Activated CD8-positive, alpha-beta T cell treated with anti-CD3 and anti-CD28 coated beads for 36 hours (primary cell): ENCODE measurements at regions of chr3 and their contacts with region 1.

Region 1: DNA sequence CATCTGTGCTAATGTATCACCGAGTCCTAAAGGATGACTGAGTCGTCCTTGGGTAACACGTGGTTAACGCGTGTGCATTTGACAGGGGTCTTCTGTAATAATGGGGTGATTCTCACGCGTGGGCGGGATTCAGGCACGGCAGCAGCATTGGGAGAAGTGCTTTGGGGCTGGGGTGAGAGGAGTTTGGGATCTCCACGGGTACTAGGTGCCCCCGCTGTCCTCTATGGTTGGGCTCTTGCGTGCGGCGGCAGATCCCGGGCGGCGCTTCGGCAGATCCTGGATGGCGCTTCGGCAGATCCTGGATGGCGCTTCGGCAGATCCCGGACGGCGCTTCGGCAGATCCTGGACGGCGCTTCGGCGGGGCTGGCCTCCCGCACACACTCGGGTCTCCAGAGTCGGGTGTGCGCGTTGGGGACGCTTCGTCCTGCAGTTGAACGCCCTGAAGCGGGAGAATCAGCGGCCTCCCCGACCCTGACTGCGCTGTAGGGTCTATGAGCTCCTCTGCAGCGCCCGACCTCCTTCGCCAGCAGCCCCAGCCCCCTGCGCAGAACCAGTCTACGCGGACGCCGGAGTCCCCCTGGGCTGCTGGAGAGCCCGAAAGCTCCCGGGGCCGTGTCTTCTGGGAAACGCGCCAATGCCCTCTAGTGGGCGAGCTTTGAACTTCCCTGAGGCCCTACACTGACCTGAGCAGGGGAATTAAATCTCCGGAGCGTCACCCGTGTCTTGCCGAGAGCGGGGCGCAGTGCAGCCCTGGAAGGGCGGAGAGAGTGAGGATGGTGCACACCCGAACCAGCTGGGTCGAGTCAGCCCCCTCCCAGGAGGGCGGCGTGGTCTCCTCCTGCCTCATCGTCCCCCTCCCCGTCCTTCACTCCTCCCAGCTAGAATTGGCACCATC is 48.1 kb upstream of the EPHB3 start:
- DNase-seq: peak; percentile 91
- ATAC-seq: peak; percentile 100
- H3K4me3 Mint-ChIP-seq: peak overlapping the region; percentile 51
- H3K27ac Mint-ChIP-seq: no peak overlapping the region
- H3K4me1 Mint-ChIP-seq: peaks cover 3% of the 10 kb centered on the region
- H3K27me3 Mint-ChIP-seq: peaks cover 48% of the 10 kb centered on the region
- CTCF ChIP-seq: peak; percentile 90

Region 2: DNA sequence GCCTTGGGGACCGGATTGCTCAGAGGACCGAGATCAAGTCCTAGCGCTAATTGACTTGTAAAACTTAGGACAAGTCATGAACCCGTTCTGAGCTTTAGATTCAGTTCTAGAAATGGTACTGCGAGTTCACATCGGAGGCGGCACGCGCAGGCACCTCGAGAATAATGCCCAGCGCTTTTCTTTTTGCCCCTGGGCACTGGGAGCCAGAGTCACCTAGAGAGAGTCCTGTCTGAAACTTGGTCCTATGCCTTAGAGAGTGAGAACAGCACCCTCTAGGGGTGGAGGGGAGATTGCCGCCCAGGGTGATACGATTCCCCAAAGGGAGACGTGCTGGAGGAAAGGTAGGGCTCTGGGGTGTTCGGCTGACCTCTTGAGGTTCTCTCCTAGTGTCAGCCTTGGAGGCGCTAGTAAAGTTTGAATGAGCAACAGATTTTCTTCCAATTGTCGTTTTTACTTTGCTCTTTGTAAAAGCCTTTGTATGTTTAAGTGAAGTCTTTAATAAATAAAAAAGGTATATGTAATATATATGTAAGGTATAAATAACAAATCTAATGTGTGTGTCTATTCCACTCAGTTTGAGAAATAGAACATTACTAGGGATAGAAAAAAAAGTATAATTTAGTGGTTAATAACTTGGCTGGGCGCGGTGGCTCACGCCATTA is 263.2 kb before region 1 on chr3:
- CTCF ChIA-PET with region 1: no interaction called
- POLR2A ChIA-PET with region 1: no interaction called
- intact Hi-C with region 1: no loop called
- DNase-seq: peak; percentile 98
- ATAC-seq: peak; percentile 67
- H3K4me3 Mint-ChIP-seq: peak overlapping the region; percentile 91
- H3K27ac Mint-ChIP-seq: peak overlapping the region; percentile 97
- H3K4me1 Mint-ChIP-seq: peaks cover 16% of the 10 kb centered on the region
- H3K27me3 Mint-ChIP-seq: no peaks in the 10 kb centered on the region
- CTCF ChIP-seq: peak; percentile 85

Region 3: DNA sequence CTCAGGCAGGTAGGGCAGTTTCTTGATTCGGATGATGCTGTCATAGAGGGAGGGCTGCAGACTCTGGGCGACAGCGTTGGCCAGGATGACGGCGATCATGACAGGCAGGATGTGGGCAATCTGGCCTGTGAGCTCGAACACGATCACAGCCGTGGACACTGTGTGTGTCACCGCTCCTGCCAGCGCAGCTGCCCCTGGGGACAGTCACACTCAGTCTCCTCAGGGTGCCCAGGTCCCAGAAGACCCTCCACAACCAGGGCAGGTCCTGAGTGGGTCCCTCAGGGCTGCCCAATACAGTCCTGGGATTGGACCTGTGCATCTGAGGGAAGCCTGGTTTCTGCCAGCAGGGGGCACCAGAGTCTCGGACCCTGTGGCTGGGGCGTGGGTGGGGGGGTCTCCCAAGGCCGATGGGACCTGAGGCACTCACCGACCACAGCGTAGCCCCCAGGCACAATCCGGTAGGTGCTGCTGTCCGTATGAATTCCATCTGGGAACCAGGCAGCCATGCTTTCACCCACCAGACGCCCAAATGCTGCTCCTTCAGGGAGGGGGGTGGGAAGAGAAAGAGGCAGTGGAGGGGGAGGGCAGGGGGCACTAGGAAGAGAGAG is 159.3 kb before region 1 on chr3:
- CTCF ChIA-PET with region 1: interaction called, 11 read pairs
- POLR2A ChIA-PET with region 1: interaction called, 3 read pairs
- intact Hi-C with region 1: no loop called
- DNase-seq: peak; percentile 82
- ATAC-seq: peak; percentile 89
- H3K4me3 Mint-ChIP-seq: no peak overlapping the region
- H3K27ac Mint-ChIP-seq: peak overlapping the region; percentile 11
- H3K4me1 Mint-ChIP-seq: peaks cover 4% of the 10 kb centered on the region
- H3K27me3 Mint-ChIP-seq: no peaks in the 10 kb centered on the region
- CTCF ChIP-seq: peak; percentile 76

Region 4: GRCh38 chr3:184371570-184372018 is 141.9 kb before region 1 on chr3:
- CTCF ChIA-PET with region 1: interaction called, 103 read pairs
- POLR2A ChIA-PET with region 1: no interaction called
- intact Hi-C with region 1: no loop called
- DNase-seq: peak; percentile 77
- ATAC-seq: peak; percentile 99
- H3K4me3 Mint-ChIP-seq: no peak overlapping the region
- H3K27ac Mint-ChIP-seq: no peak overlapping the region
- H3K4me1 Mint-ChIP-seq: peaks cover 10% of the 10 kb centered on the region
- H3K27me3 Mint-ChIP-seq: no peaks in the 10 kb centered on the region
- CTCF ChIP-seq: peak; percentile 81

Region 5: DNA sequence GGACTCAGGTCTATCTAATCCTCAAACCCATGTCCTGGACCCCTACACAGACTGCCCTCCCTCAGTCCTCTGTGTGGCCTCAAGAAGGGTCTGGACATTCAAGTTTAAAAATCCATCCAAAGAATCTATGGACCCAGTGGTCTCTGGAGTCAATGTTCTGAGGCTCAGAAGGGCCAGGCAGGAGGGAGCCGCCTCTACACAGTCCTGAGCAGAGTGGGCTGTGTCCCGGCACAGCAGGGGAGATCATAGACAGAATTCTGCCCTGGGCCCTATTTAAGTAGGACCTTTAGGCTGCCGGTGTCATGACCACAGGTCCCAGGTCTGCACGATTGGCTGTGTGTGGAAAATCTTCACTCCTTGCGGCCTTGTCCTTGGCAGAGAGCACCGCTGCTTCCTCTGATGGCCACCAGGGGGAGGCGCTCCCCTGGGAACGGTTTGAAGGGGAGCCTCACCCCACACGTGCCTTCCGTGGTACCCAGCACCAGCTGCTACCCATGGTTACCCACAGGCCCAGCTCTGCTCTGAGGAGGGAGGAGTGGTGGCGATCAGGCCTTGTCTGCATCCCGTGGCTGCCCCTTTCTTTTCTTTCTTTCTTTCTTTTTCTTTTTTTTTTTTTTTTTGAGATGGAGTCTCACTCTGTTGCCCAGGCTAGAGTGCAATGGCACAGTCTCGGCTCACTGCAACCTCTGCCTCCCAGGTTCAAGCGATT is 95.8 kb before region 1 on chr3:
- CTCF ChIA-PET with region 1: interaction called, 69 read pairs
- POLR2A ChIA-PET with region 1: no interaction called
- intact Hi-C with region 1: loop called (anchors 10 kb)
- DNase-seq: peak; percentile 78
- ATAC-seq: peak; percentile 98
- H3K4me3 Mint-ChIP-seq: no peak overlapping the region
- H3K27ac Mint-ChIP-seq: no peak overlapping the region
- H3K4me1 Mint-ChIP-seq: no peaks in the 10 kb centered on the region
- H3K27me3 Mint-ChIP-seq: peaks cover under 1% of the 10 kb centered on the region
- CTCF ChIP-seq: peak; percentile 87

Region 6: DNA sequence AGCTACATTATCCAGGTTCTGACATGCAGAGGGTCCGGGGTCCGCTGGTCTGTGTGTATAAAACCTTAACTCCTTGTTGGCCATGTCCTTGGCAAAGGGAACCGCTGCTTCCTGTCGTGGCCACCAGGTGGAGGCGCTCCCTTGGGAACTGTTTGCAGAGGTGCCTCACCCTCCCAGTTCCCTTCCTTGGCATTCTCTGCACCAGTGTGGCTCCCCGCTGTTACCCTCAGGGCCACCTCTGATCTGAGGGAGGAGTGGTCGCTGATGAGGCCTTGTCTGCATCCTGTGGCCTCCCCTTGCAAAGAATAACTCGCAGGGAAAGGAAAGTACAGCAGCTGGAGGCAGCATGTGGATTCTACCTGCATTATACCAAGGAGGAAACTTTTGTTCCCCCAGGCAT is 44.1 kb before region 1 on chr3:
- CTCF ChIA-PET with region 1: interaction called, 40 read pairs
- POLR2A ChIA-PET with region 1: interaction called, 3 read pairs
- intact Hi-C with region 1: loop called (anchors 5 kb)
- DNase-seq: peak; percentile 56
- ATAC-seq: peak; percentile 55
- H3K4me3 Mint-ChIP-seq: no peak overlapping the region
- H3K27ac Mint-ChIP-seq: no peak overlapping the region
- H3K4me1 Mint-ChIP-seq: peaks cover 20% of the 10 kb centered on the region
- H3K27me3 Mint-ChIP-seq: peaks cover 26% of the 10 kb centered on the region
- CTCF ChIP-seq: peak; percentile 63

Region 7: DNA sequence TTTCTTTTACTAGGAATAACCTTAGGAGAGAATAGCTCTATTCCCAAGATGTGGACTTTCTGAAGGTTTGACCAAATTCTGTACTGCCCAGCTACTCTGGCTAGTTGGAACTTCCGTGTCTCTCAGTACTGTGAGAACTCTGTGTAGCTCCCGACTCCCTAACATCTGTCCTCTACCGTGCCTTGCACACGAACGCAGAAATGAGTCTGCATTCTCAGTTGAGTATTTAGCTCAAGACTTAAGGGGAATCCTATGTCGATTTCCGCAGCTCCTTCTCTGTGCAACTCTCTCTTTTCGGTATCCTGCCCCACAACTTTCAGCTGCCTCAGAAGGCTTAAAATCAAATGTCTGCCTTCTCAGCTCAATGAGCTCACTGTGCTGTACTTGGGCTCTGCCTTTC is 38.6 kb before region 1 on chr3:
- CTCF ChIA-PET with region 1: interaction called, 40 read pairs
- POLR2A ChIA-PET with region 1: no interaction called
- intact Hi-C with region 1: loop called (anchors 5 kb)
- DNase-seq: no peak
- ATAC-seq: no peak
- H3K4me3 Mint-ChIP-seq: no peak overlapping the region
- H3K27ac Mint-ChIP-seq: no peak overlapping the region
- H3K4me1 Mint-ChIP-seq: peaks cover 20% of the 10 kb centered on the region
- H3K27me3 Mint-ChIP-seq: peaks cover 30% of the 10 kb centered on the region
- CTCF ChIP-seq: no peak

Region 8: GRCh38 chr3:184523825-184524615 is 10.5 kb after region 1 on chr3:
- CTCF ChIA-PET with region 1: interaction called, 79 read pairs
- POLR2A ChIA-PET with region 1: interaction called, 3 read pairs
- intact Hi-C with region 1: no loop called
- DNase-seq: peak; percentile 51
- ATAC-seq: peak; percentile 84
- H3K4me3 Mint-ChIP-seq: no peak overlapping the region
- H3K27ac Mint-ChIP-seq: no peak overlapping the region
- H3K4me1 Mint-ChIP-seq: peaks cover 14% of the 10 kb centered on the region
- H3K27me3 Mint-ChIP-seq: peaks cover 27% of the 10 kb centered on the region
- CTCF ChIP-seq: no peak